MCF 10A (cell line): ENCODE measurements at regions of chr18 and their contacts with region 1.

Region 1: GRCh38 chr18:3117493-3118192 is 102.1 kb downstream of the MYOM1 start:
- DNase-seq: peak; percentile 92
- H3K4me3 Mint-ChIP-seq: no peak overlapping the region
- H3K27ac Mint-ChIP-seq: peak overlapping the region; percentile 83
- H3K4me1 Mint-ChIP-seq: peaks cover 28% of the 10 kb centered on the region
- H3K27me3 Mint-ChIP-seq: no peaks in the 10 kb centered on the region
- CTCF ChIP-seq: no peak

Region 2: GRCh38 chr18:3104190-3105054 is 13.2 kb before region 1 on chr18:
- CTCF ChIA-PET with region 1: no interaction called
- POLR2A ChIA-PET with region 1: interaction called, 11 read pairs
- intact Hi-C with region 1: no loop called
- DNase-seq: peak; percentile 80
- H3K4me3 Mint-ChIP-seq: peak overlapping the region; percentile 49
- H3K27ac Mint-ChIP-seq: peak overlapping the region; percentile 96
- H3K4me1 Mint-ChIP-seq: peaks cover 15% of the 10 kb centered on the region
- H3K27me3 Mint-ChIP-seq: no peaks in the 10 kb centered on the region
- CTCF ChIP-seq: no peak

Region 3: DNA sequence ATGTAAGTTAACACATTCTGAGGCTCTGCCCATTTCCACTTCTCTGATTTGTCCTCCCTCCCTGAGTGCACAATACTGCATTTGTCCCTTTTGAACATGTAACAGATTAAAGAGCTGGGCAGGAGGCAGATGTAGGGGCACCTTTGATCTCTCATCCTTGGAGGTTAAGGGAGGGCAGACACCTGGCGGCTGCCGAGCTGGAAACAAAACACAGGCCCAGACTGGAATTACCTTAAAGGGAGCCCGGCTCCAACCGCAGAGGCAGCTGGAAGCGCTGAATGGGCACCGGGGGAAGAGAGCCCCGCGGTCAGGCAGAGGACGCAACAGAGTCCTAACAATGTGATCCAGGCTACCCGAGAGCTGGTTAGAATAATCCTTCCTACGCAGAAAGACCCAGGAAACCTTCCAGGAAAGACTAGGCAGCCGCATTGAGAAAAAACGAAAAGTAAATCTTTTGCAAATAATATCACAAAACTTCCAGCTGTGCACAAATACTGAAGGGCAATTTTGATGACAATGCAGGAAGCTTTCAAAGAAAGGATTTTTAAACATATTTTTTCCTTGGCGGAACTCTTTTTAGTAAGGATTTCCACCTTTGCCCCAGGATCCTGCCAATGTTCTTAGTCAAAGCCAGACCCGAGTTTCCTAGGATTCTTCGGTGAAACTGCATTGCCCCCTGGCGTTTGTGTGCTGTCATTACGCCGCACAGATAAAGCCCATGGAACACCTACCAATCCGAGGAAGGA is 548.3 kb after region 1 on chr18:
- CTCF ChIA-PET with region 1: no interaction called
- POLR2A ChIA-PET with region 1: no interaction called
- intact Hi-C with region 1: no loop called
- DNase-seq: peak; percentile 91
- H3K4me3 Mint-ChIP-seq: no peak overlapping the region
- H3K27ac Mint-ChIP-seq: peak overlapping the region; percentile 72
- H3K4me1 Mint-ChIP-seq: peaks cover 15% of the 10 kb centered on the region
- H3K27me3 Mint-ChIP-seq: no peaks in the 10 kb centered on the region
- CTCF ChIP-seq: peak; percentile 91